Dorsolateral prefrontal cortex (tissue), 120 donors: ENCODE measurements at regions of chr11 and their contacts with region 1.

Region 1: GRCh38 chr11:61254403-61255025 is 13.5 kb downstream of the PGA5 start:
- DNase-seq: peak in 8 of 10 donors; percentile 16 to 69 (median 52)
- H3K4me3 ChIP-seq: no peak overlapping the region
- H3K27ac ChIP-seq: no peak overlapping the region
- H3K27me3 ChIP-seq: no peaks in the 10 kb centered on the region
- CTCF ChIP-seq: peak; percentile 48 to 87 (median 78)

Region 2: DNA sequence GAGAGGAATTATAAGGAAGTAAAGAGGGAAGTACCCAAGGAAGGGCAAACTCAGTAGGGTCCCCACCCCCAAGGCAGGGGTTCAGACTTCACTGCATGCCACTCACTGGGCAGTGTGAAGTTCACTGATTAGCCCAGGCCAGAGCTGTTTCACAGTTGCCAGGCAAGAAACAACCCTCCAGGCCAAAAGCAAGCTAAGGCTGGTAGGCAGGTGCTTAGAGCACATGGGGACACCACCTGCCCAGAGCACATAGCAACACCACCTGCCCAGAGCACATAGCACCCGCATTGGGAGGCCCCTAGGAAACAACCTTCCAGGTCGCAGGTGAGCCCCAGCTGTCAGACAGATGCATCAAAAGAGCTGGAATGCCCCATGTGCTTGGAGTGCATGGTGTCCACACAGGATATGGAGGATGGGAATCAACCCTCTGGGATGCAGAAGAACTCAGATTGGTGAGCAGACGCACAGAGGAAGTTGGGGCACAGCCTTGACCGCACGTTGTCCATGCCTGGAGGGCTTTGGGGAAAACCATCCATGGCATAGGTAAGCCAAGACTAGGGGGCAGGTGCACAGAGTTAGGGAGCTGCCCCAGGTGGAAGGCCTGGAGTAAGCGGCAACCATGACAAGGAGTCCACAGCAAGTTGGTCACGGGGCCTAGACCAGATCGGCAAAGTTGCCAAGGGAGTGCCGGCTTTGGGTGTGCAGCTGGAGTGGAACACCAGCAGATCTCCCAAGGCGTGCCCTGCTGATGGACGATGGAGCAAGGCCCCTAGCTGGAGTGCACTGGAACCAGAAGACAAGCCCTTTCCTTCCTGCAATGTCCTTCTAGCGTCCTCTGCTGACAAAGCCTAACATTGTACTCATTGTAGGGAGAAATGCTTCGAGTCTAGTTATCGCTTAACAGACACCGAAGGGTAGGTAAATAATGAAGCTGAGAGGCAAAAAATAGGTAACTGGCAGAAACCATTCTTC is 130.0 kb after region 1 on chr11:
- intact Hi-C with region 1: loop called (anchors 10 kb)
- DNase-seq: no peak
- H3K4me3 ChIP-seq: no peak overlapping the region
- H3K27ac ChIP-seq: no peak overlapping the region
- H3K27me3 ChIP-seq: no peaks in the 10 kb centered on the region
- CTCF ChIP-seq: no peak